Activated CD4-positive, alpha-beta T cell treated with anti-CD3 and anti-CD28 coated beads for 36 hours (primary cell): ENCODE measurements at regions of chr2 and their contacts with region 1.

Region 1: DNA sequence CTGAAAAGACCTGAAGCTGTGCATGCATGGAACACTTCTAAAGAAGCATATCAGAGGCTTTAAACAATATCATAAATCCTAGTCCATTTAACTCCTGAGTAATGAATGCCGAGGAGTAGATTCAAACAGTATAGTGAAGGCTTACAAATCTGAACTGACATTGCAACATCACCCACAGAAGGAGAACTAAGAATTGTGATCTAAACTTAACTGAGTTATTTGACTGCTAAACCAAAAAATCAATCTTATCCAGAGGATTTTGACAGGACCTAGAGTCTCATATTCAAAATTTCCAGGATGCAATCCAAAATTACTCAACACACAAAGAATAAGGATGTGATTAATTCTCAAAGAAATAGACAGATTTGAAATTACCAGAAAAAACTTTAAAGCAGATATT is 181.0 kb downstream of the SLC39A10 start:
- DNase-seq: no peak
- ATAC-seq: no peak
- H3K4me3 Mint-ChIP-seq: no peak overlapping the region
- H3K27ac Mint-ChIP-seq: no peak overlapping the region
- H3K4me1 Mint-ChIP-seq: peaks cover 5% of the 10 kb centered on the region
- H3K27me3 Mint-ChIP-seq: no peaks in the 10 kb centered on the region

Region 2: GRCh38 chr2:195813421-195813820 is 24.6 kb before region 1 on chr2:
- CTCF ChIA-PET with region 1: interaction called, 3 read pairs
- POLR2A ChIA-PET with region 1: no interaction called
- intact Hi-C with region 1: loop called in 1 of 2 experiments (anchors 2 kb)
- DNase-seq: no peak
- ATAC-seq: no peak
- H3K4me3 Mint-ChIP-seq: no peak overlapping the region
- H3K27ac Mint-ChIP-seq: no peak overlapping the region
- H3K4me1 Mint-ChIP-seq: no peaks in the 10 kb centered on the region
- H3K27me3 Mint-ChIP-seq: no peaks in the 10 kb centered on the region